Endothelial cell of umbilical vein (primary cell): ENCODE measurements at regions of chr6 and their contacts with region 1.

Region 1: DNA sequence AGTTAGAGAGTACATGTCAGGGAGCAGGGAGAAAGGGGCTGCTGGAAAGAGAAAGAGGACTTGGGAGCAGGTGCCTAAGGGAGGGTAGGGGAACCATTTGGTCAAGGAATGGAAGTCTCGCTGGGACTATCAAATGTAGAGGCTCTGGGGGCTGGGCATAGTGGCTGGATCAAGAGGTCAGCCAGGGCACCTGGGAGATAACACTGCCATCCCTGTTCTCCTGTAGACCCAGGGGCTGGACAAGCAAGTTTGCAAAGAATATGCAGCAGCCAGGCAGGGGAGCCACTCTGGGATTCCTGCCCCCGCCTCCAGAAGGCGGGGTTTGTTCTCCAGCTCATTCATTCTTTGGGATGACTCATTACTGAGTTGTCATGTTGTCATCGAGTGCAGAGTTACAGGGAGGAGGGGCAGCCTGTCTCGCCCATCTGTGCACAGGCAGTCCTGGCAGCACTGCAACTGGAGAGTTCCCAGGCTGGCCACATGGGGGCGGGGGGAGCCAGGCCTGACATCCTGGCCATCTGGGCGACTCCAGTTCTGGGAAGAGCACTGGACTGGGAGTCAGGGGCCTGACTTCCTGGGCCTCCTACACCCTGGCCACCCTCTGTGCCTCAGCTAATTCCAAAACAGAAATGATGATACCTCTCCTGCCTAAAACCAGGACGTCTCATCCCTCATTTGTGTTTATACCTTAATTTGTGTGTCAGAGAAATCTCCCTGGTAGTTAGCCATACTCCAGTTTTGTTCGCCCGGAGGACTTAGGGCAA is 28.2 kb upstream of the ZFAND3 start:
- DNase-seq: peak; percentile 94
- H3K4me3 ChIP-seq: no peak overlapping the region
- H3K27ac ChIP-seq: no peak overlapping the region
- H3K4me1 ChIP-seq: peaks cover 5% of the 10 kb centered on the region
- H3K27me3 ChIP-seq: peaks cover 2% of the 10 kb centered on the region in 2 experiments
- CTCF ChIP-seq: peak; percentile 97 to 98
- POLR2A ChIP-seq: no peak

Region 2: DNA sequence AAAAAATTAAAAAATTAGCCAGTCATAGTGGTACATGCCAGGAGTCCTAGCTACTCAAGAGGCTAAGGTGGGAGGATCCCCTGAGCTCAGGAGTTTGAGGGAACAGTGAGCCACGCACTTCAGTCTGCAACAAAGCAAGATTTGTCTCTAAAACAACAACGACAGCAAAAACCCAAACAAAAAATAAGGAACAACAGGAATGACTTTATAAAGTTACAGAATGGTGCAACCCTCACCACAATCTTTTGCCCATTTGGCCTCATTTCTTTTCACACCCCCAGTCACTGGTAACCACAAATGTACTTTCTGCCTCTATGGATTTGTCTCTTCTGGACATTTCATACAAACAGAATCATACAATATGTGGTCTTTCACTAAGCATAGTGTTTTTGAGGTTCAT is 11.5 kb after region 1 on chr6:
- CTCF ChIA-PET with region 1: interaction called, 20 read pairs
- POLR2A ChIA-PET with region 1: no interaction called
- dilution Hi-C with region 1: no loop called
- intact Hi-C with region 1: no loop called
- DNase-seq: no peak
- H3K4me3 ChIP-seq: no peak overlapping the region
- H3K27ac ChIP-seq: no peak overlapping the region
- H3K4me1 ChIP-seq: no peaks in the 10 kb centered on the region
- H3K27me3 ChIP-seq: peaks cover 23 to 37% of the 10 kb centered on the region in 2 experiments
- CTCF ChIP-seq: no peak
- POLR2A ChIP-seq: no peak

Region 3: GRCh38 chr6:37819177-37819823 is 28.0 kb after region 1 on chr6 and contains the start of gene ZFAND3:
- CTCF ChIA-PET with region 1: interaction called, 12 read pairs
- POLR2A ChIA-PET with region 1: no interaction called
- dilution Hi-C with region 1: no loop called
- intact Hi-C with region 1: loop called (anchors 1 kb)
- DNase-seq: peak; percentile 95
- H3K4me3 ChIP-seq: peak within 1 kb of the TSS; percentile 88 to 92 (median 90)
- H3K27ac ChIP-seq: peak within 1 kb of the TSS; percentile 96
- H3K4me1 ChIP-seq: peaks cover 33% of the 10 kb centered on the region
- H3K27me3 ChIP-seq: peaks cover 13 to 23% of the 10 kb centered on the region in 2 experiments
- CTCF ChIP-seq: no peak
- POLR2A ChIP-seq: peak; percentile 65
- total RNA-seq, gene ZFAND3: 54.2 and 55.3 TPM in 2 replicates

Region 4: DNA sequence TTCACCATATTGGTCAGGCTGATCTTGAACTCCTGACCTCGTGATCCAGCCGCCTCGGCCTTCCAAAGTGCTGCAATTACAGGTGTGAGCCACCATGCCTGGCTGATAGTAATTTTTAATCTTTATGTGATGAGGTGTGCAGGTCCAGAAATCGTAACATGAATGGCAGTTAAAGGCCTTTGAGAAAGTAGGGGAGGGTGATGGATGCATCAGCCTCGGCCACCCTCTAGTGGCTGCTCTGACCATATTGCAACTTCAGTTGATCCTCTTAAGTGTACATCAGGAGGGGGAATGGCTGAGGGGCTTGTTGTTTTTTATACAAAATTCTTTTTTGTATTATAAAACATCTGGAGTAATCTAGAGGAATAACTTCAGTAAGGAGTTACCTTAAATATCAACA is 221.2 kb after region 1 on chr6:
- CTCF ChIA-PET with region 1: interaction called, 10 read pairs
- POLR2A ChIA-PET with region 1: no interaction called
- dilution Hi-C with region 1: no loop called
- intact Hi-C with region 1: loop called (anchors 1 kb)
- DNase-seq: peak; percentile 55
- H3K4me3 ChIP-seq: no peak overlapping the region
- H3K27ac ChIP-seq: no peak overlapping the region
- H3K4me1 ChIP-seq: no peaks in the 10 kb centered on the region
- H3K27me3 ChIP-seq: no peaks in the 10 kb centered on the region
- CTCF ChIP-seq: peak; percentile 56 to 70
- POLR2A ChIP-seq: no peak

Region 5: GRCh38 chr6:38671885-38672467 is 880.6 kb after region 1 on chr6:
- CTCF ChIA-PET with region 1: no interaction called
- POLR2A ChIA-PET with region 1: no interaction called
- dilution Hi-C with region 1: no loop called
- intact Hi-C with region 1: loop called (anchors 2 kb)
- DNase-seq: peak; percentile 60
- H3K4me3 ChIP-seq: no peak overlapping the region
- H3K27ac ChIP-seq: no peak overlapping the region
- H3K4me1 ChIP-seq: peaks cover 15% of the 10 kb centered on the region
- H3K27me3 ChIP-seq: no peaks in the 10 kb centered on the region
- CTCF ChIP-seq: peak; percentile 55 to 60
- POLR2A ChIP-seq: no peak